Mucosa of descending colon (tissue), 3 donors: ENCODE measurements at regions of chr17 and their contacts with region 1.

Region 1: GRCh38 chr17:21457051-21458026 is 81.2 kb downstream of the KCNJ12 start:
- DNase-seq: peak; percentile 90 to 98 (median 94)
- ATAC-seq: peak; percentile 99
- H3K4me3 ChIP-seq: no peak overlapping the region
- H3K4me1 ChIP-seq: peaks cover 3% of the 10 kb centered on the region
- CTCF ChIP-seq: peak; percentile 97

Region 2: GRCh38 chr17:21284319-21285163 is 172.8 kb before region 1 on chr17 and contains the start of gene MAP2K3:
- intact Hi-C with region 1: loop called in 1 of 2 experiments (anchors 10 kb)
- DNase-seq: peak; percentile 99 to 100 (median 99)
- ATAC-seq: peak; percentile 68
- H3K4me3 ChIP-seq: peak within 1 kb of the TSS; percentile 94
- H3K4me1 ChIP-seq: peaks cover 35% of the 10 kb centered on the region
- CTCF ChIP-seq: no peak
- total RNA-seq, gene MAP2K3: 46.0 to 75.5 (median 67.1) TPM